ENCODE measurements at regions of chr4 and their contacts with region 1.

Region 1: DNA sequence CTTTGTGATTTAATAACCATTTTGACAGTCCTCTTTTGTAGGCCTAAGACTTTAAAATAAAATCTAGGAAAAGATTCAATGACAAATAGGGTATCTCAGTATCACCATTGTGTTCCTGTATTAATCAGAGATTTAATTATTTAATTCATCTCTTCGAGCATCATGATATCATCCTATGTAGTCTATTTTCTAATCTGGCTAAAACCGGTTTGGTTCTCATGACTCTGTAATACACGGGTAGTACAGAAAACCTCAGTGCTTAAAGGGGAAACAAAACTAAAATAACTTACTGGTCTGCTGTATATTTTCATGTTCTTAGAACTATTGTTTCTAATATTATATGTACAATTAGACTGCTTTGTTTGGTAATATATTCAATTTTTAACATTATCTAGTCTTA is 23.7 kb upstream of the FBXW7 start:
- DNase-seq: no peak
- ATAC-seq: peak; percentile 56
- H3K4me3 ChIP-seq: no peak overlapping the region
- H3K27ac ChIP-seq: peak overlapping the region; percentile 81
- H3K4me1 ChIP-seq: peaks cover 75% of the 10 kb centered on the region
- H3K27me3 ChIP-seq: no peaks in the 10 kb centered on the region
- CTCF ChIP-seq: no peak
- EP300 ChIP-seq: no peak
- POLR2A ChIP-seq: no peak
- RAD21 ChIP-seq: no peak

Region 2: DNA sequence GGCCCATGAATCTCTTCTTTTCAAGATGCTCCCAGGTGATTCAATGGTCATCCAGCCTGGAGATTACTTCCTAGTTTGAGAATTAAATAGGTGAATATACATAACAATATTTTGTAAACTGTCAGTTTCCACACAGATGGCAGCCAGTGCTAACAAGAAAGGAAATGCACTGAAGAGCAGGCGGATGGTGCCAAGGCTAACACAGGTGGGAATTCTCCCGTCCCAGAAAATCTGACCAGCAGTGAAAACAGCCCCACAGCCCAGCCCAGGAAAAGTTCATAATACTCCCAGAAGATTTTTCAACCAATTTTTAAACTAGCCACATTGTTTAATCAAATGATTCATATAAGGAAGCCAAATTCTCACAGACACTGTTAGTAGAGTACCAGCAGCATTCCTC is 411.6 kb before region 1 on chr4:
- CTCF ChIA-PET with region 1: no interaction called
- POLR2A ChIA-PET with region 1: no interaction called
- RAD21 ChIA-PET with region 1: no interaction called
- SMC1A ChIA-PET with region 1: no interaction called
- in situ Hi-C with region 1: no loop called
- intact Hi-C with region 1: no loop called
- DNase-seq: no peak
- ATAC-seq: no peak
- H3K4me3 ChIP-seq: no peak overlapping the region
- H3K27ac ChIP-seq: no peak overlapping the region
- H3K4me1 ChIP-seq: no peaks in the 10 kb centered on the region
- H3K27me3 ChIP-seq: no peaks in the 10 kb centered on the region
- CTCF ChIP-seq: no peak
- EP300 ChIP-seq: no peak
- POLR2A ChIP-seq: no peak
- RAD21 ChIP-seq: no peak

Region 3: GRCh38 chr4:152436384-152436783 is 123.3 kb before region 1 on chr4:
- CTCF ChIA-PET with region 1: no interaction called
- POLR2A ChIA-PET with region 1: no interaction called
- RAD21 ChIA-PET with region 1: no interaction called
- SMC1A ChIA-PET with region 1: no interaction called
- in situ Hi-C with region 1: no loop called
- intact Hi-C with region 1: no loop called
- DNase-seq: no peak
- ATAC-seq: peak; percentile 43
- H3K4me3 ChIP-seq: no peak overlapping the region
- H3K27ac ChIP-seq: no peak overlapping the region
- H3K4me1 ChIP-seq: peaks cover 4% of the 10 kb centered on the region; the same call in 1 of the 2 replicates
- H3K27me3 ChIP-seq: no peaks in the 10 kb centered on the region
- CTCF ChIP-seq: peak in 2 of 3 experiments; percentile 17 to 29; a peak in 1 of 6 replicates
- EP300 ChIP-seq: no peak
- POLR2A ChIP-seq: no peak
- RAD21 ChIP-seq: no peak

Region 4: DNA sequence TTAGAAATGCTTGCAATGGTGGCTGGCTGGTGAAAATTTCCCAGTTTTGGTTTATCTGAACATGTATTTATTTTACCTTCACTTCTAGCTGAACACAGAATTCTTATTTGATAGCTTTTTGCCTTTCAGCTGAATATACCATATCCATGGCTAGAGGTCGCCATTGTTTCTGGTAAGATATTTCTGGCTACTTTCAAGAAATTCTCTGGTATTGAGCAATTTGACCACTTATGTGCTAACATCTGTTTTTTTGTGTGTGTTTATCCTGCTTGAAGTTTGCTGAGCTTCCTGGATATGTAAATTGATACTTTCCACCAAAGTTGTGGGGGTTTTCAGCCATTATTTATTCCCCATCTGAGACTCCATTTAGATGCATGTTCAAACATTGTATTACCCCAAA is 99.2 kb before region 1 on chr4:
- CTCF ChIA-PET with region 1: interaction called, 7 read pairs
- POLR2A ChIA-PET with region 1: no interaction called
- RAD21 ChIA-PET with region 1: interaction called, 7 read pairs
- SMC1A ChIA-PET with region 1: interaction called, 6 read pairs
- in situ Hi-C with region 1: no loop called
- intact Hi-C with region 1: loop called (anchors 5 kb)
- DNase-seq: peak; percentile 43
- ATAC-seq: peak; percentile 32
- H3K4me3 ChIP-seq: no peak overlapping the region
- H3K27ac ChIP-seq: peak overlapping the region; percentile 73
- H3K4me1 ChIP-seq: peaks cover 54% of the 10 kb centered on the region
- H3K27me3 ChIP-seq: no peaks in the 10 kb centered on the region
- CTCF ChIP-seq: peak; percentile 9 to 57 (median 38); a peak in 4 of 6 replicates
- EP300 ChIP-seq: no peak
- POLR2A ChIP-seq: no peak
- RAD21 ChIP-seq: peak; percentile 68

Region 5: DNA sequence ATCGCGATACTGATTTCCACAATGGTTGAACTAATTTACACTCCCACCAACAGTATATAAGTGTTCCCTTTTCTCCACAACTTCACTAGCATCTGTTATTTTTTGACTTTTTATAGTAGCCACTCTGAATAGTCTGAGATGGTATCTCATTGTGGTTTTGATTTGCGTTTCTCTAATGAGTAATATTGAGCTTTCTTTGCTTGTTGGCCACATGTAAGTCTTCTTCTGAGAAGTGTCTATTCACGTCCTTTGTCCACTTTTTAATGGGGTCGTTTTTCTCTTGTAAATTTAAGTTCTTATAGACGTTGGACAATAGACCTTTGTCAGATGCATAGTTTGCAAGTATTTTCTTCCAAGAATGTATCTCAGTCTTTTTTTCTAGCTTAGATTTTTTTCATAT is 33.8 kb before region 1 on chr4:
- CTCF ChIA-PET with region 1: interaction called, 4 read pairs
- POLR2A ChIA-PET with region 1: interaction called, 228 read pairs
- RAD21 ChIA-PET with region 1: interaction called, 34 read pairs
- SMC1A ChIA-PET with region 1: interaction called, 231 read pairs
- in situ Hi-C with region 1: no loop called
- intact Hi-C with region 1: no loop called
- DNase-seq: no peak
- ATAC-seq: peak; percentile 55
- H3K4me3 ChIP-seq: peak overlapping the region; percentile 46; the same call in 1 of the 2 replicates
- H3K27ac ChIP-seq: peak overlapping the region; percentile 55
- H3K4me1 ChIP-seq: peaks cover 53% of the 10 kb centered on the region
- H3K27me3 ChIP-seq: no peaks in the 10 kb centered on the region
- CTCF ChIP-seq: no peak
- EP300 ChIP-seq: no peak
- POLR2A ChIP-seq: no peak
- RAD21 ChIP-seq: no peak

Region 6: GRCh38 chr4:152572417-152573086 is 12.9 kb after region 1 on chr4:
- CTCF ChIA-PET with region 1: interaction called, 3 read pairs
- POLR2A ChIA-PET with region 1: interaction called, 10 read pairs
- RAD21 ChIA-PET with region 1: interaction called, 7 read pairs
- SMC1A ChIA-PET with region 1: interaction called, 42 read pairs
- in situ Hi-C with region 1: no loop called
- intact Hi-C with region 1: no loop called
- DNase-seq: no peak
- ATAC-seq: peak; percentile 96
- H3K4me3 ChIP-seq: no peak overlapping the region
- H3K27ac ChIP-seq: no peak overlapping the region
- H3K4me1 ChIP-seq: peaks cover 4% of the 10 kb centered on the region; the same call in 1 of the 2 replicates
- H3K27me3 ChIP-seq: no peaks in the 10 kb centered on the region
- CTCF ChIP-seq: no peak
- EP300 ChIP-seq: peak; percentile 53 to 72; a peak in 3 of 4 replicates
- POLR2A ChIP-seq: no peak
- RAD21 ChIP-seq: no peak

Region 7: DNA sequence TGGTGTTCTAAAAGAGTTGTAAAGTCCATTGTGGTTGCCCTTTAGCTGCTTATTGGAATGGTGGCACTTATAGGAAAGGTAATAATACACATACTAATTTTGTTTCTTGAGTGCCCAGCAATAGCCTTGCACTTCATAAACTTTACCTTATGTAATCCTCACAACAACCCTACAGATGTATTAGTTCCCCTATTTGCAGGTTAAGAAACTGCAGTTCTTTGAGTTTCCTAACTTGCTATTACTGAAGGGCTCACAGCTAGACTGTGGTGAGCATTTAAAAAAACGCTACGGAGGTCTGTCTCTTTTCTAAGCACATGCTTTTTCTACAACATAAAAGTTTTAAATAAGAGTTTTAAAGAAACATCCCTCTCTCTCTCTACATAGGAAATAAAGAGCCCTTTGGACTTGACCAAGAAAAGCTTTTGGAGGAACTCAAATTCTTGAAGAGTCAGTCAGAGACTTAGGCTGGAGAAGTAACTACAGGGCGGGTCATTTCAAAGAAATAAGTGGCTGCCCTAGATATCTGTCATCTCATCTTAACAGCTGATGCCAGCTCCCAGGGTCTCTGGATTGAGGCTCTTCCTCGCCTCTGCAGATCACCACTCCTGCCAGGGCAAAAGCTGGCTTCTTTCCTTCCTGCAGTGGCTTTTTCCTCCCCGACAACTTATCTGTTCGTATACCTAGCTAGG is 18.2 kb after region 1 on chr4:
- CTCF ChIA-PET with region 1: interaction called, 5 read pairs
- POLR2A ChIA-PET with region 1: interaction called, 6 read pairs
- RAD21 ChIA-PET with region 1: interaction called, 7 read pairs
- SMC1A ChIA-PET with region 1: interaction called, 42 read pairs
- in situ Hi-C with region 1: no loop called
- intact Hi-C with region 1: no loop called
- DNase-seq: no peak
- ATAC-seq: peak; percentile 94
- H3K4me3 ChIP-seq: no peak overlapping the region
- H3K27ac ChIP-seq: no peak overlapping the region
- H3K4me1 ChIP-seq: no peaks in the 10 kb centered on the region
- H3K27me3 ChIP-seq: no peaks in the 10 kb centered on the region
- CTCF ChIP-seq: 0 out of 6 replicates have a peak, but pooled peaks of 1 of the 3 experiments have one; percentile 5
- EP300 ChIP-seq: no peak
- POLR2A ChIP-seq: no peak
- RAD21 ChIP-seq: no peak

Region 8: DNA sequence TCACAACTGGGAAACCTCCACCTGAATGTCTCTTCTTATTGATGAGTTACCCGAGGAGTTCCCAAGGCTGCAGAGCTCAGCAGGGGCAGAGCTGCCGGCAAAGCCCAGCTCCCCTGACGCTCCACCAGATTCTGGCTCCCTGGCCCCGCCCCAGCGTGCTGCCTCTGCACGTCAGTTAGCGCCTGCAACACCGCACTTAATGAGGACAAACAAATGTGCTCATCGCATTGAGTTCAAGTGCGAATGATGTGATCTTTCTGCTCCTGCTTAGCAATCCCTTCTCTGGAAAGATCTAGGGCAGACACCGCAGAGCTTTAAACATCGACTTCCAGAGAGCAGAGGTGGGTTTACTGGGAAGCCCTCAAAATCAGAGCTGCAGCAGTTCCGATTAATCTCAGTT is 31.8 kb after region 1 on chr4:
- CTCF ChIA-PET with region 1: no interaction called
- POLR2A ChIA-PET with region 1: interaction called, 6 read pairs
- RAD21 ChIA-PET with region 1: interaction called, 13 read pairs
- SMC1A ChIA-PET with region 1: interaction called, 10 read pairs
- in situ Hi-C with region 1: no loop called
- intact Hi-C with region 1: no loop called
- DNase-seq: no peak
- ATAC-seq: peak; percentile 61
- H3K4me3 ChIP-seq: no peak overlapping the region
- H3K27ac ChIP-seq: no peak overlapping the region
- H3K4me1 ChIP-seq: peaks cover 18% of the 10 kb centered on the region
- H3K27me3 ChIP-seq: no peaks in the 10 kb centered on the region
- CTCF ChIP-seq: no peak
- EP300 ChIP-seq: no peak
- POLR2A ChIP-seq: no peak
- RAD21 ChIP-seq: no peak

Region 9: DNA sequence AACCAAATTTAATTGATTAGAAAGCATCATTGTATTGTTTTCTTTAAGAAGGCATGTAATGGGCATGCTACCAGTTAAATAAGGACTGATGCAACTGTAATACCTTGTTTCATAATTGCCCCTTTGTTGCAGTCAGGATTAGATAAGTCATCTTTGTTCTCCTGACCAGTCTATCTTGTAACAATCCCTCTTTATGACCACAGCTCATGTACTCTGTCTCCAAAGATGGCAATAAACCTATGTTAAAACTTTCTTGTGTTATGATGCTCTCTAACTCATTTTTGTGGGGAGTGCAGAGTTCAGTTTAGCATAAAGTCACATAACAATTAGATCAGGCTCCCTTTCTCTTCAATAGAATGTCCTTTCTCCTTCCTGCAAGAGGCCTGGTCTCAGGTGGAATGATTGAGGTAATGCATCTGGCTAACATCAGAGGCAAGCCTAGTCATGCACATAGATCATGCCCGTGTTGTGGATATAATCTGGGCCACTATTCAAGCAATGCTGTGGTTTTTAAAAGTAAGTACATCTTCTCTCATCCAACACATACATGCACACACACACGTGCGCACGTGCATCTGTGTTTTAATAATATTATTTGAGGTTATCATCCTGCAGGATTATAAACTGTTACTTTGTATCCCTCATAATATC is 74.6 kb after region 1 on chr4:
- CTCF ChIA-PET with region 1: interaction called, 13 read pairs
- POLR2A ChIA-PET with region 1: interaction called, 11 read pairs
- RAD21 ChIA-PET with region 1: interaction called, 100 read pairs
- SMC1A ChIA-PET with region 1: interaction called, 138 read pairs
- in situ Hi-C with region 1: no loop called
- intact Hi-C with region 1: no loop called
- DNase-seq: no peak
- ATAC-seq: no peak
- H3K4me3 ChIP-seq: no peak overlapping the region
- H3K27ac ChIP-seq: no peak overlapping the region
- H3K4me1 ChIP-seq: peaks cover 25% of the 10 kb centered on the region
- H3K27me3 ChIP-seq: no peaks in the 10 kb centered on the region
- CTCF ChIP-seq: no peak
- EP300 ChIP-seq: no peak
- POLR2A ChIP-seq: no peak
- RAD21 ChIP-seq: no peak

Measured in GM12878 (cell line).